MCF 10A (cell line): ENCODE measurements at regions of chr1 and their contacts with region 1.

Region 1: DNA sequence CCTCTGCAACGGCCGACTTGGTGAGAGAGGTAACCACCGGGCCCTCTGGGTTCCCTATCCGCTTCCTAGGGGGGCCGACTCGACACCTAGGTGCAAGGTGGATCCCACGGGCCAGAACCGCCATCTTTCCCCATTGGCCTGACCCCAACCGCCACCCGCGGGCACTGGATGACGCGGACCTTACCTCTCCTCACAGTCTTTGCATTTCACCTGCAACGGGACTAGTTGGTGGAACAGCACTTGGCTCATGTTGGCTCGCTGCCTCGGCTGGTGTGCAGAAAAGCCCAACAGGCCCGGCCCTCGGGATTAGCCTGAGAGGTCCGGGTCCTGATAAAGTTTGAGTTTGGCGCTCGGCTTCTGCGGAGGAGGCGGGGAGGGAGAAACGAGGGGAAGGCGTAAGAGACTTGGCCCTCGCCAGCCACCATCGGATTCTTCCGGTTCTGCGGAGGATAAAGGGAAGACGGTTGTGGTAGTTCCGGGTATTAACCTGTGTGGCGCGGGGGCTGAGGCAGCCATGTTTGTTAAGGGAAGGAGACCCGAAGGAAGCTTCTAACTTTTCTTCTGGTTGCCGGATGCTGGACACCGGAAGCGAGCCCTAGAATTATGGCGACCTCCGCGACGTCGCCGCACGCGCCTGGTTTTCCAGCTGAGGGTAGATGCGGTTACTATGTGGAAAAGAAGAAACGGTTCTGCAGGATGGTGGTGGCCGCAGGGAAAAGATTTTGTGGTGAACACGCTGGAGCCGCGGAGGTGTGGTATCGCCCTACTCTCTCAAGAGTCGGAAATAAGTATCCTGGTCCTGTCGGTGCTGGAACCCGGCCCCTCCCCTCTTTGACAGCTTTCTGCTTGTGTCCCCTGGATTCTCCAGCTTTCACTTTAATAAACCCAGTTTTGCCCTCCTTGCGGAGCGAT is at the starts of genes SASS6 and TRMT13:
- DNase-seq: peak; percentile 98
- H3K4me3 Mint-ChIP-seq: peak within 1 kb of the TSS; percentile 86
- H3K27ac Mint-ChIP-seq: peak within 1 kb of the TSS; percentile 75
- H3K4me1 Mint-ChIP-seq: peaks cover 19% of the 10 kb centered on the region
- H3K27me3 Mint-ChIP-seq: no peaks in the 10 kb centered on the region
- CTCF ChIP-seq: no peak
- total RNA-seq, gene SASS6: 6.6 and 7.5 TPM in 2 replicates
- total RNA-seq, gene TRMT13: 24.2 and 25.5 TPM in 2 replicates

Region 2: GRCh38 chr1:100145116-100145515 is 12.3 kb after region 1 on chr1:
- CTCF ChIA-PET with region 1: no interaction called
- POLR2A ChIA-PET with region 1: interaction called, 10 read pairs
- intact Hi-C with region 1: no loop called
- DNase-seq: no peak
- H3K4me3 Mint-ChIP-seq: no peak overlapping the region
- H3K27ac Mint-ChIP-seq: no peak overlapping the region
- H3K4me1 Mint-ChIP-seq: no peaks in the 10 kb centered on the region
- H3K27me3 Mint-ChIP-seq: no peaks in the 10 kb centered on the region
- CTCF ChIP-seq: no peak

Region 3: GRCh38 chr1:100249537-100250257 is 116.9 kb after region 1 on chr1 and contains the start of gene DBT:
- CTCF ChIA-PET with region 1: no interaction called
- POLR2A ChIA-PET with region 1: interaction called, 13 read pairs
- intact Hi-C with region 1: no loop called
- DNase-seq: peak; percentile 96
- H3K4me3 Mint-ChIP-seq: no peak within 1 kb of the TSS
- H3K27ac Mint-ChIP-seq: no peak within 1 kb of the TSS
- H3K4me1 Mint-ChIP-seq: peaks cover 9% of the 10 kb centered on the region
- H3K27me3 Mint-ChIP-seq: no peaks in the 10 kb centered on the region
- CTCF ChIP-seq: no peak
- total RNA-seq, gene DBT: 9.1 and 11.0 TPM in 2 replicates